Spleen (tissue), 13 donors: ENCODE measurements at regions of chr5 and their contacts with region 1.

Region 1: GRCh38 chr5:151447174-151448037 is at the start of gene SLC36A1:
- DNase-seq: peak; percentile 98
- H3K4me3 ChIP-seq: peak within 1 kb of the TSS; percentile 74 to 90 (median 76)
- H3K27ac ChIP-seq: peak within 1 kb of the TSS; percentile 54 to 90 (median 73)
- H3K4me1 ChIP-seq: peaks cover 3 to 31% (median 17%) of the 10 kb centered on the region in 6 donors
- H3K27me3 ChIP-seq: peaks cover 0 to 12% (median 0%) of the 10 kb centered on the region in 7 donors
- CTCF ChIP-seq: peak; percentile 96 to 99 (median 98)
- POLR2A ChIP-seq: no peak
- total RNA-seq, gene SLC36A1: 13.4 to 29.6 (median 20.9) TPM

Region 2: GRCh38 chr5:151499501-151500035 is 52.2 kb after region 1 on chr5:
- intact Hi-C with region 1: loop called (anchors 5 kb)
- DNase-seq: no peak
- H3K4me3 ChIP-seq: no peak overlapping the region
- H3K27ac ChIP-seq: no peak overlapping the region
- H3K4me1 ChIP-seq: peaks cover 0 to 24% (median 4%) of the 10 kb centered on the region in 6 donors
- H3K27me3 ChIP-seq: no peaks in the 10 kb centered on the region
- CTCF ChIP-seq: no peak
- POLR2A ChIP-seq: no peak

Region 3: GRCh38 chr5:151592855-151593408 is 145.5 kb after region 1 on chr5:
- intact Hi-C with region 1: no loop called
- DNase-seq: no peak
- H3K4me3 ChIP-seq: no peak overlapping the region
- H3K27ac ChIP-seq: no peak overlapping the region
- H3K4me1 ChIP-seq: no peaks in the 10 kb centered on the region
- H3K27me3 ChIP-seq: peaks cover 0 to 12% (median 0%) of the 10 kb centered on the region in 7 donors
- CTCF ChIP-seq: no peak
- POLR2A ChIP-seq: no peak

Region 4: DNA sequence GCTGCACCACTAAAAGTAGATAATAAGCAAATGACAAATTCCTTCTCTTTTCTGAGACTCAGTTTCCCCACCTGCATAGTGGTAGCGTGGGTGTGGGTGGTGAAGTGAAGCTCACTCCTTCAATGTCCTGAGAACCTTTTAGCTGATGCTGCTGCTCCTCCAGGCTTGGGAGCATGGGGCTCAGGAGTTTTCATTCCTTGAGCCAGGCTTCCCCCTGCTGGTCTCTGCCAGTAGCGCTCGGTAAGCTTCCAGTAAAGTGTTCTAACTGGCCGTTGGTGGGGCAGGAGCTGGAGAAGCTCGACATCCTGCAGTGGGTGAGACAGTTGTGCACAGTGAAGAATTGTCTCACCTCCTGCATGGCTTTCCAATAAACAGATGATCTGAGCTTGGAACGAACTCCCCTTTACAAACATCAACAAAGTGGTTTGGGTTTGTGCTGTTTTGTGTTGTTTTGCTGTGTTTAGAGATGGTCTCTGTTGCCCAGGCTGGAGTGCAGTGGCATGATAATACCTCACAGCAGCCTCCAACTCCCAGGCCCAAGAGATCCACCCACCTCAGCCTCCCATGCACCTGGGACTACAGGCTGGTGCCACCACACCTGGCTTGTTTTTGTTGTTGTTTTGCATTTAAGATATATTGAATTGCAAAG is 204.7 kb after region 1 on chr5:
- intact Hi-C with region 1: loop called (anchors 5 kb)
- DNase-seq: peak; percentile 85
- H3K4me3 ChIP-seq: no peak overlapping the region
- H3K27ac ChIP-seq: no peak overlapping the region
- H3K4me1 ChIP-seq: peaks cover 0 to 6% (median 0%) of the 10 kb centered on the region in 6 donors
- H3K27me3 ChIP-seq: no peaks in the 10 kb centered on the region
- CTCF ChIP-seq: peak; percentile 65 to 89 (median 80)
- POLR2A ChIP-seq: no peak

Region 5: GRCh38 chr5:151740336-151740942 is 293.0 kb after region 1 on chr5:
- intact Hi-C with region 1: loop called (anchors 10 kb)
- DNase-seq: no peak
- H3K4me3 ChIP-seq: peak overlapping the region in 1 of 8 donors; percentile 5
- H3K27ac ChIP-seq: peak overlapping the region in 7 of 8 donors; percentile 16 to 52 (median 47)
- H3K4me1 ChIP-seq: peaks cover 15 to 65% (median 37%) of the 10 kb centered on the region in 6 donors
- H3K27me3 ChIP-seq: no peaks in the 10 kb centered on the region
- CTCF ChIP-seq: peak; percentile 57 to 93 (median 87)
- POLR2A ChIP-seq: no peak